ENCODE measurements at regions of chr2 and their contacts with region 1.

Region 1: DNA sequence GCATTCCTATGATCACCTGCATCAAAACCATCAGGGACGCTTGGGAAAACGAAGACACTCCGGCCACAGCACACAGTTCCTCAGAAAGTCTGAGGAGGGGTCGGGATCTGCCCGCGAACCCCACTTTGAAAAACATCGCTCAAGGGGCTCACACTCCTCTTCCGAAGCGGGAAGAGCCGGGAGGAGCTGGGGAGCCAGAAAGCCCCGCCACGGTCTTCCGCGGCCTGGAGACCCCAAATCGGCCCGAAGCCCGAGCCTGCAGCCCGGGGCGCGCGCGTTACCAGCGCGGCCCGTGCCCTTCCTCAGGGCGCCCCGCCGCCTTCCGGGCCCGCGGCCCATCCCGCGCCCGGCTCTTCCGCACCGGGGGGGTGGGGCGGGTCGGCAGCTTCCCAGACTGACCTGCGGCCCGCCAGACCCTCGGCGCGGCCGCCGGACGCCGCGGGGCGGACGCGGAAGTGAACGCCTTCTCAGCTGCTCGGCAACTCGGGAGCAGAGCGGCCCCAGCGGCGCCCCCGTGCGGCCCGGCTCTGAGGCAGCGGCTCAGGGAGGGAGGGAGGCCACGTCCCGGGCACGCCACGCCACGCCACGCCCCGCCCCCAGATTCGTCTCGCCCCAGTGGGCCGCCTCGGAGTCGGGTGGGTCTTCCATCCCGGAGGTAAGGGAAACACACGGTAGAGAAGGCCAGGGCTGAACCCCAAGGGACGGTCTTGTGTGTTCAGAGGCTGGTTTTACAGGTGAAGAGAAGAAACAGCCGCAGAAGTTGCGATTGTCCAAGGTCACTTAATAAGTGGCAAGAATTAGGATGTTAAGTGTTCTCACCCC is at the start of gene KCTD18:
- DNase-seq: peak; percentile 94
- ATAC-seq: peak; percentile 99
- H3K4me3 Mint-ChIP-seq: peak within 1 kb of the TSS; percentile 91
- H3K27ac Mint-ChIP-seq: peak within 1 kb of the TSS; percentile 86
- H3K4me1 Mint-ChIP-seq: peaks cover 9% of the 10 kb centered on the region
- H3K27me3 Mint-ChIP-seq: no peaks in the 10 kb centered on the region
- total RNA-seq, gene KCTD18: 14.4 to 16.3 TPM

Region 2: GRCh38 chr2:200475795-200476194 is 34.0 kb before region 1 on chr2:
- CTCF ChIA-PET with region 1: no interaction called
- DNase-seq: no peak
- ATAC-seq: no peak
- H3K4me3 Mint-ChIP-seq: no peak overlapping the region
- H3K27ac Mint-ChIP-seq: no peak overlapping the region
- H3K4me1 Mint-ChIP-seq: peaks cover 22% of the 10 kb centered on the region
- H3K27me3 Mint-ChIP-seq: no peaks in the 10 kb centered on the region

Region 3: GRCh38 chr2:200525882-200526651 is 16.2 kb after region 1 on chr2 and contains the start of gene SGO2:
- CTCF ChIA-PET with region 1: interaction called, 18 read pairs
- DNase-seq: peak; percentile 98
- ATAC-seq: peak; percentile 99
- H3K4me3 Mint-ChIP-seq: peak within 1 kb of the TSS; percentile 95
- H3K27ac Mint-ChIP-seq: peak within 1 kb of the TSS; percentile 89
- H3K4me1 Mint-ChIP-seq: peaks cover 42% of the 10 kb centered on the region
- H3K27me3 Mint-ChIP-seq: no peaks in the 10 kb centered on the region
- total RNA-seq, gene SGO2: 39.7 to 52.5 TPM

Measured in activated CD8-positive, alpha-beta memory T cell treated with anti-CD3 and anti-CD28 coated beads, Interleukin-2, amount 10 ng/mL, durations not matched to agents 7 days and 5 days (primary cell).